Endothelial cell of umbilical vein (primary cell): ENCODE measurements at regions of chr1 and their contacts with region 1.

Region 1: GRCh38 chr1:94854458-94855306 is 34.5 kb downstream of the SLC44A3 start:
- DNase-seq: peak; percentile 94
- H3K4me3 ChIP-seq: peak overlapping the region in 2 of 3 experiments; percentile 20 to 27
- H3K27ac ChIP-seq: peak overlapping the region; percentile 57
- H3K4me1 ChIP-seq: peaks cover 16% of the 10 kb centered on the region
- H3K27me3 ChIP-seq: peaks cover 0 to 1% of the 10 kb centered on the region in 2 experiments
- CTCF ChIP-seq: peak; percentile 90 to 93
- POLR2A ChIP-seq: peak; percentile 48

Region 2: DNA sequence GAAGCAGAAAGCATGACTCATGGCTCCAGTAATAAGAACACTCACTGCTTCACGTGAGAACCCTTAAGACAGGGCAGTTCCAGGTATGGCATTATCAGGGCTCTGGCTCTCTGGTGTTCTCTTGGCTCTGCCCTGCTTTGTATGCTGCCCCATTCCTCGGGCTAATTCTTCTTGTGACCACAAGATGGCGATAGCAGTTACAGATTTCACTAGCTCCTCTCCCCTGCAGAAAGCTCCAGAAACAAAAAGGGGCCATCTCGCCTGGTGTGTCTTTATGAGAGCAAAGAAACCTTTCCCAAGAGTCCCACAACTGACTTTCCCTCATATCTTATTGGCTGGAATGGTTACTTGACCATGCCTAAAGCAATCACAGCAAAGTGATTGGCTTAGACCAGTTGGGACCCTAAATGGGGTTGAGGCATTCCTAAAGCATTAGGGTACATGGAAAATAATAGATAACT is 373.2 kb before region 1 on chr1:
- CTCF ChIA-PET with region 1: interaction called, 14 read pairs
- POLR2A ChIA-PET with region 1: no interaction called
- dilution Hi-C with region 1: no loop called
- intact Hi-C with region 1: no loop called
- DNase-seq: peak; percentile 67
- H3K4me3 ChIP-seq: no peak overlapping the region
- H3K27ac ChIP-seq: no peak overlapping the region
- H3K4me1 ChIP-seq: no peaks in the 10 kb centered on the region
- H3K27me3 ChIP-seq: no peaks in the 10 kb centered on the region
- CTCF ChIP-seq: peak; percentile 83 to 86
- POLR2A ChIP-seq: no peak

Region 3: DNA sequence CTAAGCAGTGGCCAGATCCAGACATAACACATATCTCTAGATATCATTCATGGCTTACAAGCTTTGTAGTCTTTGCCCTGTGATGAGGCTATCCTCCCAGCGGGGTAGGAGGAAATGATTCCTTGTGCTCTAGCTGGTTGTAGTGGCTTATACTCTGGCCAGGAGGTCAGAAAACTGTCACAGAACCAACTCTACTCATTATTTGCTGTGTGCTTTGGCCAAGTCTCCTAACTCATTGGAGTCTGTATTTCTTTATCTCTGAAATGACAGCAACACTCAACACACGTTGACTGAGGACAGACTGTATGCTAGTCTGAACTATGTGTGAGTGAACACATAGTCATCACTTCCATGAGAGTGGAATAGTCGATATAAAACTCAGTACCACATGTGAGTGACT is 196.5 kb before region 1 on chr1:
- CTCF ChIA-PET with region 1: no interaction called
- POLR2A ChIA-PET with region 1: no interaction called
- dilution Hi-C with region 1: no loop called
- intact Hi-C with region 1: no loop called
- DNase-seq: no peak
- H3K4me3 ChIP-seq: no peak overlapping the region
- H3K27ac ChIP-seq: no peak overlapping the region
- H3K4me1 ChIP-seq: peaks cover 10% of the 10 kb centered on the region
- H3K27me3 ChIP-seq: no peaks in the 10 kb centered on the region
- CTCF ChIP-seq: no peak
- POLR2A ChIP-seq: no peak

Region 4: DNA sequence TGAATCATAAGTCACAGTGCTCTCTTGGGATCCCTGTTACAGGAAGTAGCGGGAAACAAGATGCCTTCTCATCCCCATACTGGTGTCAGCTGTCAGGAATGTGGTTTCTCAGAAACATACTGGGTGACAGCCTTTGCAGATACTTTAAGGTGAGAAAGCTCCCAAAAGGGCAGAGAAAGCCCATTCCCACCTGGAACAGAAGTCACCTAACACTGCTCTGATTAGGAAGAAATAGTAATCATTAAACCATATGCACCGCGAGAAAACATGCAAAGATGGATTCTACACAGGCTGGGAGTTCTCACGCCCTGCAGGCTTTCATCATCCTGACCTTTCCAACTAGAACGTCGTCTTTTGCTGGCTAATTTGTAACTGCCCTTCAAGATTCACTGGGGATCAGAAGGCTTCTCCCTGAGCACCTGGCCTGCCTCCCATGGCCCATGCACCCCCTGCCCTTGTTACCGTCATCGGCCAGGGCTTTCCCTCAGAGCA is 80.7 kb before region 1 on chr1:
- CTCF ChIA-PET with region 1: no interaction called
- POLR2A ChIA-PET with region 1: no interaction called
- dilution Hi-C with region 1: no loop called
- intact Hi-C with region 1: no loop called
- DNase-seq: no peak
- H3K4me3 ChIP-seq: no peak overlapping the region
- H3K27ac ChIP-seq: no peak overlapping the region
- H3K4me1 ChIP-seq: no peaks in the 10 kb centered on the region
- H3K27me3 ChIP-seq: no peaks in the 10 kb centered on the region
- CTCF ChIP-seq: no peak
- POLR2A ChIP-seq: no peak

Region 5: GRCh38 chr1:94832446-94832845 is 22.2 kb before region 1 on chr1:
- CTCF ChIA-PET with region 1: interaction called, 10 read pairs
- POLR2A ChIA-PET with region 1: no interaction called
- dilution Hi-C with region 1: no loop called
- intact Hi-C with region 1: no loop called
- DNase-seq: no peak
- H3K4me3 ChIP-seq: no peak overlapping the region
- H3K27ac ChIP-seq: no peak overlapping the region
- H3K4me1 ChIP-seq: no peaks in the 10 kb centered on the region
- H3K27me3 ChIP-seq: peaks cover 13 to 17% of the 10 kb centered on the region in 2 experiments
- CTCF ChIP-seq: no peak
- POLR2A ChIP-seq: no peak

Region 6: GRCh38 chr1:94892604-94893254 is 38.0 kb after region 1 on chr1:
- CTCF ChIA-PET with region 1: interaction called, 26 read pairs
- POLR2A ChIA-PET with region 1: no interaction called
- dilution Hi-C with region 1: no loop called
- intact Hi-C with region 1: loop called (anchors 1 kb)
- DNase-seq: no peak
- H3K4me3 ChIP-seq: no peak overlapping the region
- H3K27ac ChIP-seq: no peak overlapping the region
- H3K4me1 ChIP-seq: no peaks in the 10 kb centered on the region
- H3K27me3 ChIP-seq: no peaks in the 10 kb centered on the region
- CTCF ChIP-seq: no peak
- POLR2A ChIP-seq: no peak

Region 7: GRCh38 chr1:94919241-94920030 is 64.8 kb after region 1 on chr1:
- CTCF ChIA-PET with region 1: interaction called, 52 read pairs
- POLR2A ChIA-PET with region 1: no interaction called
- dilution Hi-C with region 1: no loop called
- intact Hi-C with region 1: no loop called
- DNase-seq: no peak
- H3K4me3 ChIP-seq: no peak overlapping the region
- H3K27ac ChIP-seq: no peak overlapping the region
- H3K4me1 ChIP-seq: peaks cover 34% of the 10 kb centered on the region
- H3K27me3 ChIP-seq: no peaks in the 10 kb centered on the region
- CTCF ChIP-seq: no peak
- POLR2A ChIP-seq: no peak

Region 8: DNA sequence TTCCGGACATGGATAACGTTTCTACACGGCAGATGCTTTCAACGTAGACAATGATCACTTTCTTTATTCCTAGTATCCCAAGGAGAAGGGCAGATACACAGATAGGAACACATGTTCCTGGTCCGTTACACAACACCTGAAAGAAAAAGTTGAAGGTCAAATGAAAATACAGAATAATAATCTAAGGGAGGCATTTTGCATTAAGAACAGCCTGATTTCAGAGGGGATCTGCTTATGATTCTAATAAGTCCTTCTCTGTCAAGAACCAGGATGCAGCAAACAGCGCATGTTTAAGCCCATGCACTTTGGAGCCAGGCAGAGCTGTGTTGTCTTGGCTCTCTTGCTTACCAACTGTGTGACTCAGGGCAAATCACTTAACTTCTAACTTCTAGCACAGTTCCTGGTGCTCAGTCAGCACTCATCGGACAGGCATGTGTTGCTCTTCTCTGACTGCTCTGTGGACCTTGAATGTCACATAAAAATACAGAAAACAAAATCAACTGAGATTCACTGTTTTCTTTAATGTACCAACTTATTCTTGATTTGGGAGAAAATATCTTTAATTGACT is 128.6 kb after region 1 on chr1:
- CTCF ChIA-PET with region 1: interaction called, 8 read pairs
- POLR2A ChIA-PET with region 1: no interaction called
- dilution Hi-C with region 1: no loop called
- intact Hi-C with region 1: loop called (anchors 5 kb)
- DNase-seq: peak; percentile 29
- H3K4me3 ChIP-seq: no peak overlapping the region
- H3K27ac ChIP-seq: no peak overlapping the region
- H3K4me1 ChIP-seq: peaks cover 35% of the 10 kb centered on the region
- H3K27me3 ChIP-seq: no peaks in the 10 kb centered on the region
- CTCF ChIP-seq: no peak
- POLR2A ChIP-seq: no peak

Region 9: GRCh38 chr1:95023399-95024043 is 168.8 kb after region 1 on chr1:
- CTCF ChIA-PET with region 1: interaction called, 12 read pairs
- POLR2A ChIA-PET with region 1: no interaction called
- dilution Hi-C with region 1: no loop called
- intact Hi-C with region 1: no loop called
- DNase-seq: peak; percentile 77
- H3K4me3 ChIP-seq: no peak overlapping the region
- H3K27ac ChIP-seq: no peak overlapping the region
- H3K4me1 ChIP-seq: peaks cover 39% of the 10 kb centered on the region
- H3K27me3 ChIP-seq: no peaks in the 10 kb centered on the region
- CTCF ChIP-seq: no peak
- POLR2A ChIP-seq: no peak